AG04450 (cell line): ENCODE measurements at regions of chr1 and their contacts with region 1.

Region 1: DNA sequence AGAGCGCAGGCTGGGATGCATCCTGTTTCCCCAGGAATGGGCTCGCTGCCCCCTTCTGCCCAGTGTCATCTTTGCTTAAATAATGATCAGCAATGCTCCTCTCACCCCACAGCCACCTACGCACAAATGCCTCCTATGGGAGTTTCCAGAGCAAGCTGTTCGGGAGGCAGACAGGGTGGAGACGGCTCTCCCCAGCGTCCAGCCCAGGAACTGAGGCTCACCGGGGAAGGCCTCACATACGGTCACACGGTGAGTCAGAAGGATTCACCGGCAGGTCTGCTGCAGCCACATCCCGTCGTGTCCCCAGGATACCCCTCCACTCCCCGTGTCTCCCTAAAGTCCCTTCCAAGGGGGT is 40.3 kb upstream of the RUNX3 start:
- DNase-seq: no peak
- H3K4me3 ChIP-seq: no peak overlapping the region
- H3K27ac ChIP-seq: no peak overlapping the region
- H3K27me3 ChIP-seq: no peaks in the 10 kb centered on the region
- CTCF ChIP-seq: 0 out of 2 replicates have a peak, but pooled peaks have one; percentile 24

Region 2: GRCh38 chr1:24841593-24841992 is 128.8 kb before region 1 on chr1:
- CTCF ChIA-PET with region 1: no interaction called
- POLR2A ChIA-PET with region 1: no interaction called
- DNase-seq: no peak
- H3K4me3 ChIP-seq: no peak overlapping the region
- H3K27ac ChIP-seq: no peak overlapping the region
- H3K27me3 ChIP-seq: no peaks in the 10 kb centered on the region
- CTCF ChIP-seq: no peak

Region 3: DNA sequence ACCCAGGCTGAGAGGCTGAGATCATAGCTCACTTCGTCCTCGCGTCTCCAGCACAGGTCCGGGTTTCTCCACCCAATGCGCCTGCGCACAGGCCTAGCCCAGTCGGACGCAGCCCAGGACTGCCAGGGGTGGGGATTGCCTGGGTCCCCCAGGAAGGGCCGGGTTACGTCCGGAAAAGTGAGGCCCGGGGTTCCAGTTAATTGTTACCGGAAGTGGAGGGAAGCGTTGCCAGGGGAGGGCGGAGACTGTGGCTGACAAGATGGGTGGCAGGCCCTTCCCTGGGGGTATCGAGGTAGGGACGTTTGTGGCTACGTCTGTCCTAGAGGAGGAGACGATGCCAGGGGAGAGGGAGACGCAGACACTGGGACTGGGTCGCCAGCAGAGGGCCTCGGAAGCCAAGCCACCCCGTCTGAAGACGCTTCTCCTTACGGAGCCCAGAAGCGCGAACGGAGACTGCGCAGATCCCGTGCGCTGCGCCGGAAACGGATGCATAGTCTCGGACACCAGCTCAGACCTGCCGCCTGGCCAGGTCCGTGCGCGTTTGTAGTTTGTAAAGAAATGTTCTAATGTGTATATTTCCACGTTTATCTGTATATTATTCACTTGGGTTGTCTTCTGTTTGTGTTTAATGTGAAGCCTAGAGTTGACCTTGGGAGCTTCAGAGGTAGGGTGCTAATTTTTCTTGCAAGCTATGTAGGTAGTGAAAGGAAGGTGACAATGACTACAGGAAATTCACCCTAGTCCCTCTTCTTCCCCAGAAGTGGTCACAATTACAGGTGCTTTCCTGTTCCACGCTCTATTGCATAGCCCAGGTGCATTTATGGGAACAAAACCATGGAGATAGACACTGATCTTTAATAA is 269.5 kb after region 1 on chr1:
- CTCF ChIA-PET with region 1: no interaction called
- POLR2A ChIA-PET with region 1: interaction called, 12 read pairs
- DNase-seq: peak; percentile 52
- H3K4me3 ChIP-seq: peak overlapping the region; percentile 63
- H3K27ac ChIP-seq: peak overlapping the region; percentile 92
- H3K27me3 ChIP-seq: no peaks in the 10 kb centered on the region
- CTCF ChIP-seq: peak; percentile 53